ENCODE measurements at regions of chr3 and their contacts with region 1.

Region 1: GRCh38 chr3:71130471-71131374 is 452.8 kb downstream of the FOXP1 start:
- DNase-seq: peak; percentile 86
- H3K4me3 ChIP-seq: peak overlapping the region; percentile 33 to 61 (median 52)
- H3K27ac ChIP-seq: peak overlapping the region; percentile 84 to 93 (median 86)
- H3K4me1 ChIP-seq: peaks cover 0 to 81% (median 55%) of the 10 kb centered on the region in 4 donors
- H3K27me3 ChIP-seq: no peaks in the 10 kb centered on the region
- CTCF ChIP-seq: no peak
- EP300 ChIP-seq: no peak
- POLR2A ChIP-seq: peak; percentile 50 to 60

Region 2: GRCh38 chr3:71064288-71064955 is 66.3 kb before region 1 on chr3:
- intact Hi-C with region 1: loop called (anchors 2 kb)
- DNase-seq: peak; percentile 74
- H3K4me3 ChIP-seq: peak overlapping the region; percentile 71 to 81 (median 72)
- H3K27ac ChIP-seq: peak overlapping the region; percentile 92 to 99 (median 98)
- H3K4me1 ChIP-seq: peaks cover 0 to 67% (median 60%) of the 10 kb centered on the region in 4 donors
- H3K27me3 ChIP-seq: no peaks in the 10 kb centered on the region
- CTCF ChIP-seq: no peak
- EP300 ChIP-seq: no peak
- POLR2A ChIP-seq: no peak

Region 3: GRCh38 chr3:71201939-71202338 is 71.2 kb after region 1 on chr3:
- intact Hi-C with region 1: loop called (anchors 5 kb)
- DNase-seq: peak; percentile 89
- H3K4me3 ChIP-seq: no peak overlapping the region
- H3K27ac ChIP-seq: peak overlapping the region; percentile 59 to 85 (median 78)
- H3K4me1 ChIP-seq: peaks cover 0 to 70% (median 57%) of the 10 kb centered on the region in 4 donors
- H3K27me3 ChIP-seq: no peaks in the 10 kb centered on the region
- CTCF ChIP-seq: no peak
- EP300 ChIP-seq: no peak
- POLR2A ChIP-seq: no peak

Region 4: DNA sequence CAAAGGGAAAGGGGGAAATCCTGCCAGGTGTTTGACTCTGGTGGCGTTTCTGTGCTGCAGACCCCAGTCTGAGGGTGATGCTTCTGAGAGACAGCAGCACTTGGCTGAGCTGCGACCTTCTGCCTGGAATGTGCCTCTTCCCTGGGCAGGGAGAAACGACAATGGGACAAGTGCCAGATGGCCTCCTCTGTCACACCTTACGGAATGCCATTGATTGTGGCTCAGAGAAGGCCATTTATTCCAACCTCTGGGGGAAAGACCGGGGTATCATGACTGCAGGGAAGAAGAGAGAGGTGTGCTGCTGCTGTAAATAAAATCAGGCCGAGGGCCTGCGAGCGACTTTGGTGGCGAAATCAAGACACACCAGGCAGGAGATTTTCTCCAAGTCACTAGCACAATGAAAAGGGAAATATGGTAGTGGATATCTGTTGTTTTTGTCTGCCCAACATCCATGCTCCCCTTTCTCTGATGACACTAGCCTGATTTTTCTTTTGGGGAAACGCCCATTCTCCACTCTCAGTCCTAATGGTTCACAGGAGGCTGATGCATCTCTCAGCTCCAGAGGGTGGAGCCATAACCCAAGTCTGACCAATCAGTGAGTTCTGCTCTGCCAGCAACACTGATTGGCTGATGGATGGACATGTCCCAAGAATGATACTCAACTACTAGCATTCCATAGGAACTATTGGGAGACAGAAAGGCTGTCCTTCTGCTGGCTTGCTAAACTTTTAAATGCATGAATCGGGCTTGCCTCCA is 116.7 kb after region 1 on chr3:
- intact Hi-C with region 1: loop called (anchors 2 kb)
- DNase-seq: no peak
- H3K4me3 ChIP-seq: no peak overlapping the region
- H3K27ac ChIP-seq: peak overlapping the region; percentile 79 to 89 (median 85)
- H3K4me1 ChIP-seq: peaks cover 0 to 41% (median 20%) of the 10 kb centered on the region in 4 donors
- H3K27me3 ChIP-seq: no peaks in the 10 kb centered on the region
- CTCF ChIP-seq: no peak
- EP300 ChIP-seq: no peak
- POLR2A ChIP-seq: no peak

Region 5: GRCh38 chr3:71652781-71653413 is 522.2 kb after region 1 on chr3:
- intact Hi-C with region 1: loop called (anchors 10 kb)
- DNase-seq: peak; percentile 80
- H3K4me3 ChIP-seq: peak overlapping the region in 2 of 4 donors; percentile 23 to 29
- H3K27ac ChIP-seq: peak overlapping the region; percentile 11 to 58 (median 29)
- H3K4me1 ChIP-seq: peaks cover 0 to 23% (median 16%) of the 10 kb centered on the region in 4 donors
- H3K27me3 ChIP-seq: no peaks in the 10 kb centered on the region
- CTCF ChIP-seq: peak; percentile 25 to 43 (median 30)
- EP300 ChIP-seq: no peak
- POLR2A ChIP-seq: no peak

Region 6: GRCh38 chr3:71681224-71681668 is 550.5 kb after region 1 on chr3:
- intact Hi-C with region 1: loop called (anchors 10 kb)
- DNase-seq: peak; percentile 89
- H3K4me3 ChIP-seq: no peak overlapping the region
- H3K27ac ChIP-seq: peak overlapping the region; percentile 56 to 70 (median 67)
- H3K4me1 ChIP-seq: peaks cover 0 to 70% (median 41%) of the 10 kb centered on the region in 4 donors
- H3K27me3 ChIP-seq: no peaks in the 10 kb centered on the region
- CTCF ChIP-seq: peak; percentile 31 to 64 (median 58)
- EP300 ChIP-seq: no peak
- POLR2A ChIP-seq: no peak